Mucosa of descending colon (tissue), 3 donors: ENCODE measurements at regions of chr22 and their contacts with region 1.

Region 1: DNA sequence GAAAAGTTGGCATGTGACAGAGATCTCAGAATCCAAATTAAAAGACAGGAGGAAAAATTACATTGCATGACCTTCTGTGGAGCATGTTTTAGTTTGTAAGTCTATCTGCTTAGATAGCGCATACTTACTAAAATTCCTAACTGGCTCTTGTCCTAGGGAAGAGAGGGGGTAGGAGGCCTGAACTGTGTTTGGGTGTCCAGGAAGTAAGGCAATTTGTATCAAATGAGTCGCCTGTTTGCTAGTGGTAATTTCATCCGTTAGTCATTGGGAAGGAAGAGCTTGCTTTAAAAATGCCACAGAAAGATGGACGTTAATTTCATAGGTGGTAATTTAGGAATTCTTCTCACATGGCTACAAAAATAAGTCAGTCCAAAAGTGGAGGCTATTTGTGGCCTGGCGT is 18.5 kb downstream of the GRK3 start:
- DNase-seq: no peak
- ATAC-seq: no peak
- H3K4me3 ChIP-seq: no peak overlapping the region
- H3K4me1 ChIP-seq: no peaks in the 10 kb centered on the region
- CTCF ChIP-seq: no peak

Region 2: GRCh38 chr22:25282671-25283561 is 300.0 kb before region 1 on chr22:
- intact Hi-C with region 1: loop called in 1 of 2 experiments (anchors 10 kb)
- DNase-seq: no peak
- ATAC-seq: no peak
- H3K4me3 ChIP-seq: no peak overlapping the region
- H3K4me1 ChIP-seq: no peaks in the 10 kb centered on the region
- CTCF ChIP-seq: no peak